Endothelial cell of umbilical vein (primary cell): ENCODE measurements at regions of chr13 and their contacts with region 1.

Region 1: DNA sequence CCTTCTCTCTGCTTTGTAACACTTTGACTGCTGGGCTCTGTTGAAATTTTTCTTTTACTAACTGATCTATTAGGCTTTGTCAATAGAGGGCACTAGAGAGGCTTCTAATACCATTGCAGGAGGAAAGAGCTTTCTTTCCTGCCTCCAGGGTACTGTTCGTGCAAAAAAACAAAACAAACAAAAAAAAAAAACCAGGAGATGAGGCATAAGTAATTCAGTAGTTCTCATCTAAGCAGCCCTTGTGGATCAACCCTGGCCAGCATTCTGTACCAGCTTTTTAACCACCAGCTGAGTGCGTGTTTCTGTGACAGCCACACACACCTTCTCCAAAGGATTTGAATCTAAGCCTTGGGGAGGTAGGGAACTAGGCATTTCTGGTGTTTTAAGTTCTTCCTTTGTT is 1707.6 kb upstream of the SLC10A2 start:
- DNase-seq: peak; percentile 54
- H3K4me3 ChIP-seq: no peak overlapping the region
- H3K27ac ChIP-seq: no peak overlapping the region
- H3K4me1 ChIP-seq: no peaks in the 10 kb centered on the region
- H3K27me3 ChIP-seq: no peaks in the 10 kb centered on the region
- CTCF ChIP-seq: peak; percentile 59 to 61
- POLR2A ChIP-seq: no peak

Region 2: GRCh38 chr13:104571161-104571892 is 202.4 kb before region 1 on chr13:
- CTCF ChIA-PET with region 1: interaction called, 13 read pairs
- POLR2A ChIA-PET with region 1: no interaction called
- dilution Hi-C with region 1: no loop called
- intact Hi-C with region 1: no loop called
- DNase-seq: peak; percentile 89
- H3K4me3 ChIP-seq: no peak overlapping the region
- H3K27ac ChIP-seq: peak overlapping the region; percentile 4
- H3K4me1 ChIP-seq: no peaks in the 10 kb centered on the region
- H3K27me3 ChIP-seq: no peaks in the 10 kb centered on the region
- CTCF ChIP-seq: peak; percentile 73 to 76
- POLR2A ChIP-seq: no peak

Region 3: GRCh38 chr13:104785952-104786351 is 12.2 kb after region 1 on chr13:
- CTCF ChIA-PET with region 1: interaction called, 12 read pairs
- POLR2A ChIA-PET with region 1: no interaction called
- dilution Hi-C with region 1: no loop called
- intact Hi-C with region 1: no loop called
- DNase-seq: no peak
- H3K4me3 ChIP-seq: no peak overlapping the region
- H3K27ac ChIP-seq: no peak overlapping the region
- H3K4me1 ChIP-seq: no peaks in the 10 kb centered on the region
- H3K27me3 ChIP-seq: no peaks in the 10 kb centered on the region
- CTCF ChIP-seq: no peak
- POLR2A ChIP-seq: no peak

Region 4: GRCh38 chr13:105202354-105202753 is 428.6 kb after region 1 on chr13:
- CTCF ChIA-PET with region 1: interaction called, 74 read pairs
- POLR2A ChIA-PET with region 1: no interaction called
- dilution Hi-C with region 1: no loop called
- intact Hi-C with region 1: loop called (anchors 1 kb)
- DNase-seq: peak; percentile 69
- H3K4me3 ChIP-seq: no peak overlapping the region
- H3K27ac ChIP-seq: no peak overlapping the region
- H3K4me1 ChIP-seq: no peaks in the 10 kb centered on the region
- H3K27me3 ChIP-seq: no peaks in the 10 kb centered on the region
- CTCF ChIP-seq: peak; percentile 51 to 70
- POLR2A ChIP-seq: no peak

Region 5: GRCh38 chr13:105346141-105346775 is 572.5 kb after region 1 on chr13:
- CTCF ChIA-PET with region 1: no interaction called
- POLR2A ChIA-PET with region 1: no interaction called
- dilution Hi-C with region 1: no loop called
- intact Hi-C with region 1: no loop called
- DNase-seq: peak; percentile 20
- H3K4me3 ChIP-seq: no peak overlapping the region
- H3K27ac ChIP-seq: no peak overlapping the region
- H3K4me1 ChIP-seq: no peaks in the 10 kb centered on the region
- H3K27me3 ChIP-seq: no peaks in the 10 kb centered on the region
- CTCF ChIP-seq: no peak
- POLR2A ChIP-seq: no peak